ENCODE measurements at regions of chr1 and their contacts with region 1.

Region 1: GRCh38 chr1:200971955-200972711 is 51.4 kb downstream of the KIF21B start:
- DNase-seq: peak; percentile 6
- H3K4me3 ChIP-seq: no peak overlapping the region
- H3K27ac ChIP-seq: no peak overlapping the region
- H3K27me3 ChIP-seq: peaks cover 3% of the 10 kb centered on the region
- CTCF ChIP-seq: peak; percentile 71

Region 2: DNA sequence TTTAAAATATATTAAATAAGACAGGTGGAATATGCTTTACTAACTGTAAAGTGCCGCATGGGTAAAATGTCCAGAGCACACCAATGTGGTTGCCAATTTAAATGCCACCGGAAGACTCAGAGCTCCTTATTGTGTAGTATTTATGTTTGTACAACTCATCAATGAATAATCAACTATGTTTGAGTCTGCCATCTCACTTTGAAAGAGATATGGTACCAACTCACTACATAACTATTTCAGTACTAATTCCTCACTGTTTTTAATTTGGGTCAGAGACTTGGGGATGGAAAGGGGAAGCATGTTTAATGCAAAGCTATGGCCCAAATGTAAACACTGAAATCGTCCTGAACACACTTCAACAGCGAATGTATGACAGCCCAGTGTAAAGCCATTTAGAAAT is 799.8 kb before region 1 on chr1:
- CTCF ChIA-PET with region 1: no interaction called
- POLR2A ChIA-PET with region 1: no interaction called
- DNase-seq: no peak
- H3K4me3 ChIP-seq: no peak overlapping the region
- H3K27ac ChIP-seq: no peak overlapping the region
- H3K27me3 ChIP-seq: no peaks in the 10 kb centered on the region
- CTCF ChIP-seq: no peak

Region 3: DNA sequence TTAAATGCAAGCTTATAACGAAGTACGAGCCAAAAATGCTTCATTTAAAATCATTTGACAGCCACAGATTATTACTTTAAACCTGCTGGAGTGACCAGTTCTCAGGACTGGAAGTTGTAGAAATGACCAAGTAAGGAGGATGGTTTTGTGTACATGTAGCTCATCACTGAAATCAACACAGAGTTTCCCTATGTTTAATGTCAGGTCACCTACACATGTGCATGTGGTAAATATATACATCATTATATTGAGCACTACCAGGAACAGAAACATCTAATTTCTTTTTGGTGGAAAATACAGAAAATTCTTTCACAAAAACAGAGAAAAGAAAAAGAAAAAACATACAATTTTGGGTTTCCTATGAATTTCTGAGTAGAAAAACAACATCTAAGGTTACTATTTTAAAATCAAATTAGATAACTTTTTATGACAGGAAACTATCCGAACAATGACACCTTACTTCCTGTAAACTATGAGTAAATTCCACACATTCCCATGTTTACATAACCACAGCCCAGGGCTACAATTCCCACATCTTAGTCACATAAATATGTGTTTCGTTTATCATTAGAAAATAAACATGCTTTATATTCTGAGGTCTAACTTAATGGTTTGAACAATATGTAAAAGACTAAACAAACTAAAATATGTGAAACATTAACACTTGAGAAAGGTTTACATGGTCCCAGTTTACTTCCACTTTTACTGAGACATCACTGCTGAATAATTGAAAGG is 635.9 kb before region 1 on chr1:
- CTCF ChIA-PET with region 1: no interaction called
- POLR2A ChIA-PET with region 1: no interaction called
- DNase-seq: no peak
- H3K4me3 ChIP-seq: no peak overlapping the region
- H3K27ac ChIP-seq: peak overlapping the region; percentile 21
- H3K27me3 ChIP-seq: no peaks in the 10 kb centered on the region
- CTCF ChIP-seq: no peak

Region 4: DNA sequence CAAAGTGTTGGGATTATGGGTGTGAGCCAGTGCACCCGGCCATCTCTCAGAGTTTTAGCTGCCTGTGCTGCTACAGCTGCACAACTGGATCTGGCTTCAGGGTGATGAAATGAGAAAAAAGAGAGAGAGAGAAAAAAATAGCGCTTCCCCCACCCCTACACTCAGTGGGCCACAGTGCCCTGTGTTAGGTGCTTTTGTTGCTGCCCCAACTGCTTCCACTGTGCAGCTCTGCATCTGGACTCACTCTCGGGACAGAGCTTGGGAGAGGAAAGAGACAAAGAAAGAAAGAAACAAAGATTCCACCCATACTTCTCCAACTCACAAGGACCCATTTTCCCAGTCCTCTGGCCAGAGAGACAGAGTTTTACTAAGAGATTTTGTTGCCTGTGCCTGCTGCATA is 27.0 kb before region 1 on chr1:
- CTCF ChIA-PET with region 1: interaction called, 13 read pairs
- POLR2A ChIA-PET with region 1: no interaction called
- DNase-seq: no peak
- H3K4me3 ChIP-seq: no peak overlapping the region
- H3K27ac ChIP-seq: no peak overlapping the region
- H3K27me3 ChIP-seq: peaks cover 13% of the 10 kb centered on the region
- CTCF ChIP-seq: no peak

Region 5: GRCh38 chr1:201019321-201019977 is 47.3 kb after region 1 on chr1:
- CTCF ChIA-PET with region 1: interaction called, 12 read pairs
- POLR2A ChIA-PET with region 1: no interaction called
- DNase-seq: no peak
- H3K4me3 ChIP-seq: no peak overlapping the region
- H3K27ac ChIP-seq: no peak overlapping the region
- H3K27me3 ChIP-seq: peaks cover 23% of the 10 kb centered on the region
- CTCF ChIP-seq: no peak

Region 6: GRCh38 chr1:201042779-201043461 is 70.8 kb after region 1 on chr1:
- CTCF ChIA-PET with region 1: interaction called, 67 read pairs
- POLR2A ChIA-PET with region 1: interaction called, 3 read pairs
- DNase-seq: peak; percentile 47
- H3K4me3 ChIP-seq: no peak overlapping the region
- H3K27ac ChIP-seq: no peak overlapping the region
- H3K27me3 ChIP-seq: peaks cover 13% of the 10 kb centered on the region
- CTCF ChIP-seq: peak; percentile 90

Region 7: DNA sequence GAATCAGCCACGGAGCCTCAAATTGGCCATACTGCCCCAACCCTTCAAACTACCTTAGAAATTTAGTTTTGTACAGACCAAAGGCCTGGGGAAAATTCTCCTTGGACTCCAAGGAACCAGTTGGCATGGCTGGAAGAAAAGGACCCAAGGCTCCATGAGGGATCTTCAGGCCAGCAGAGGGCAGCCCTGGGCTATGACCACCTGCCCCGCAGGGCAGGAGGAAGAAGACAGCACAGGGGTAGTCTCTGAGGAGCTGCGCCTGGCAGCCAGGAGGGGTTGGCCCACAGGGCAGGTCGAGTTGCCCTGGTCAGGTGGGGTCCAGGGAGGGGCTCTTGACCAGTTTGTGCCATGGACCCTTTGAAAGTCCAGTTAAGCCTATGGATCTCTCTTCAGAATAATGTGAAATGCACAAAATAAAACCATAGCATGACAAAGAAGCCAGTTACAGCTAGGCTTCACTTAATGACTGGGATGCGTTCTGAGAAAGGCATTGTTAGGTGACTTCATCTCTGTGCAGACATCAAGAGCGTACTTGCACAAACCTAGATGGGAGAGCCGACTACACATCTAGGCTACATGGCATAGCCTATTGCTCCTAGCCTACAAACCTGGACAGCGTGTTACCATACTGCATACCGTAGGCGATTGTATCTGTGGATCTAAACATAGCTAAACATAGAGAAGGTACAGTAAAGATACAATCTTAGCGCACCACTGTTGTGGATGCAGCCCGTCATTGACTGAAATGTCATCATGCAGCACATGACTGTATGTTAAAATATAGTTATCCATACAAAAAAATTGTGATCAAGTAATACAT is 114.0 kb after region 1 on chr1:
- CTCF ChIA-PET with region 1: interaction called, 23 read pairs
- POLR2A ChIA-PET with region 1: no interaction called
- DNase-seq: no peak
- H3K4me3 ChIP-seq: no peak overlapping the region
- H3K27ac ChIP-seq: no peak overlapping the region
- H3K27me3 ChIP-seq: peaks cover 52% of the 10 kb centered on the region
- CTCF ChIP-seq: peak; percentile 71

Region 8: DNA sequence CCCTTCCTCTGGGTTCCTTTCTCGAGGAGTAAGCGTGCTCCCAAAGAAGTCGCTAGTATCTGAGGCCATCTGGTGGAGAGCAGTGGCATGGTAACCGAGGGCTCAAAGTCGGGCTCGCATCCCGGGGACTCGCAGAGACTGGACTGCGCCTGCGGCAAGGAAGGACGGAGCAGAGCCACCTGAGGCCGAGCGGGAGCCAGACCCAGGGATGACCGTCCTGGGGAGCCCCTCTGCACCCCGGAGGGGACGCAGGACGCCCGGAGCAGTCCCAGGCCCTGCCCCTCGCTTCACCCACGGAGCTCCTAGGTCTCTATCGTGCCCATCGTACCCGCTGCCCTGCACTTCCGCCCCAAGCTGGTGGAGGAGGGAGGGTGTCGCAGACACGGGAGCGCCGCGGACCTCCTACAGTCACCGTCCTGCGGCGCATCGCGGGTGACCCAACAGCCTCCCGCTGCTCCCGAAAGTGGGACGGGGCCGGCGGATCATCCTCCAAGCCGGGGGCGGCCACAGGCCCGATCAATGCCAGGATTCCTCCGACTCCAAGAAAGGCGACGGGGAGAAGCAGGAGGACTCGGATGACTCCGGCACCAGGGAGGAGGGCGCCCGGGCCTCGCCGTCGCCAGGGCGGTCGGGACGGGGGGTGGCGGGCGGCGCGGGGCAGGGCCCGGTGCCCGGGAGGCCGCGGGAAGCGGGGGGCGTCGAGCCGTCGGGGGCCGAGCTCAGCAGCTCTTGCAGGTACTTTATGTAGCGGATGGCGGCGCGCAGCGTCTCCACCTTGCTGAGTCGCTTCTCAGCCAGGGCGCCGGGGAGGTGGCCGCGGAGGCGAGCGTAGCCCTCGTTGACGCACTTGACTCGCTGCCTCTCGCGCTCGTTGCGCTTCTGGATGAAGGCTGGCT is 142.4 kb after region 1 on chr1:
- CTCF ChIA-PET with region 1: interaction called, 64 read pairs
- POLR2A ChIA-PET with region 1: no interaction called
- DNase-seq: peak; percentile 61
- H3K4me3 ChIP-seq: peak overlapping the region; percentile 66
- H3K27ac ChIP-seq: no peak overlapping the region
- H3K27me3 ChIP-seq: peaks cover 48% of the 10 kb centered on the region
- CTCF ChIP-seq: peak; percentile 90

Measured in AG04450 (cell line).